ENCODE measurements at regions of chr1 and their contacts with region 1.

Region 1: DNA sequence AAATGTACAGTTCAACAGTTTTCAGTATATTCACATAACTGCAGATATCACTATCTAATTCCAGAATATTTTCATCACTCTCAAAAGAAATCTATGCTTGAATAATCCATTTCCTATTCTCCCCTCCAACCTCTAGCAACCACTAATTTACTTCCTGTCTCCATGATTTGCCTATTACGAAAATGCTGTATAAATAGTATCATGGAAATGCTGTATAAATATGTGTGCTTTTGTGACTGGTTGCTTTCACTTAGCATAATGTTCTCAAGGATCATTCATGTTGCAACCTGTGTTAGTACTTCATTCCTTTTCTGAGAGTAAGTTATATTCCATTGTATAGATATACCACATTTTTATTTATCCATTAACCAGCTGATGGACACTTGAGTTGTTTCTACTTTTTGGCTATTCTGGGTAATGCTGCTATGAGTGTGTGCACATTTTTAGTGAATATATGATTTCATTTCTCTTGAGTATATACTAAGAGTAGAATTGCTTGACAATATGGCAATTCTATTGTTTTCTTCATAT is 115.6 kb downstream of the TNFSF18 start:
- DNase-seq: no peak
- H3K4me3 ChIP-seq: no peak overlapping the region
- H3K27ac ChIP-seq: peak overlapping the region; percentile 74
- H3K4me1 ChIP-seq: peaks cover 8% of the 10 kb centered on the region in 2 donors
- H3K27me3 ChIP-seq: no peaks in the 10 kb centered on the region
- CTCF ChIP-seq: no peak

Region 2: DNA sequence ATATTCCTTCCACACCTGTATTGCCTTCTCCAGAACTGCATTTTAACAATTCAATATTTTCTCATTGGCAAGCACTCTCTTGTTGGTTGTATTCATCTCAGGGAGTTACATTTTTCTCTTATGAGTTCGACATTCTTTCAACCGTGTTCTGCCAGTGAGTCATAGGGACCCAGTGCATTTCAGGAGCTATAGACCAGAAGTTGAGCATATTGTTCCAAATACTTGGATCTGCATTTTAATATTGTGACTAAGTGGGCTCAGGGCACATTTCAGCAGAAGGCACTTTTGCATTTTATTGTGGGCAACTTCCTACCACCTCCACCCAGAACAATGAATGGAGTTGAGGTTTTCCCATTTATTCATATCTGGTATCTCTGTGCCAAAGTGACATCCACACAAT is 17.2 kb before region 1 on chr1:
- intact Hi-C with region 1: loop called (anchors 1 kb)
- DNase-seq: peak in 1 of 2 donors; percentile 66
- H3K4me3 ChIP-seq: no peak overlapping the region
- H3K27ac ChIP-seq: peak overlapping the region in 1 of 2 donors; percentile 43
- H3K4me1 ChIP-seq: peaks cover 0 to 15% of the 10 kb centered on the region in 2 donors
- H3K27me3 ChIP-seq: no peaks in the 10 kb centered on the region
- CTCF ChIP-seq: no peak

Region 3: DNA sequence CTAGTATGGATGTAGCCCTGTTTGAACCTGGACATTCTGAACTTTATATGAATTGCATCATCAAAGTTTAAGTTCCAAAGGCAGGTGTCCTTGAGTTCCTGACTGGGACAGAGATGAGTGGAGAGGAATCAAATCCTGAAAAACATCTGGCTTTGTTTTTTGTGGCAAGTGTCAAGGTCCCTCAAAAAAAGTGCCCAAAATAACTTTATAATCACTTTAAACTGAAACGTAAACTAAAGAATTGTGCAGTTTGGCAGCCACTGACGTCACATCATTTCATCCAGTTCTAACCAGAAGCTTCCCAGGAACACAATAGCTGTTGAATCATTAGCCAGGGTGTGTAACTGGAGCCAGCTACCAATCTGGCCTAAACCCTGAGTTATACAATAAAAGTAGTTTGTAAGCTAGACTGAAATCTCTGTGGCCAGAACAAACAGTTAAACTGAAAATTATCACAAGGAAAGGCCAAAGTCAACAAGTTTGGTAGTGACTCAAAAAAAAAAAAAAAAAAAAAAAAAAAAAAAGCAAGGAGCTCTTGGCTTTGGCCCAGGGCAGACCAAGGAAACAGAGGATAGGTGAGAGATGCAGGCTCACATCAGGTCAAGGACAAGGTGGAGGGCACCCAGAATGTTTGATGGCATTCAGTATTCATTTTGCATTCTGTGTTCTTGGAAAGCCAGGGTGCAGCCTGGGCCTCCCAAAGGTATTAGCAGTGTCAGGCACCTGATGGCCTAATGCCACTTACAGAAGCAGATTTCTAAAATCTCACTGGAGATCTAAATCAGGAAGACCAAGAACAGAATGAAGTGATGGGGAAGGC is 41.3 kb after region 1 on chr1:
- intact Hi-C with region 1: loop called (anchors 2 kb)
- DNase-seq: no peak
- H3K4me3 ChIP-seq: no peak overlapping the region
- H3K27ac ChIP-seq: no peak overlapping the region
- H3K4me1 ChIP-seq: peaks cover 0 to 7% of the 10 kb centered on the region in 2 donors
- H3K27me3 ChIP-seq: no peaks in the 10 kb centered on the region
- CTCF ChIP-seq: no peak